ENCODE measurements at regions of chr1 and their contacts with region 1.

Region 1: DNA sequence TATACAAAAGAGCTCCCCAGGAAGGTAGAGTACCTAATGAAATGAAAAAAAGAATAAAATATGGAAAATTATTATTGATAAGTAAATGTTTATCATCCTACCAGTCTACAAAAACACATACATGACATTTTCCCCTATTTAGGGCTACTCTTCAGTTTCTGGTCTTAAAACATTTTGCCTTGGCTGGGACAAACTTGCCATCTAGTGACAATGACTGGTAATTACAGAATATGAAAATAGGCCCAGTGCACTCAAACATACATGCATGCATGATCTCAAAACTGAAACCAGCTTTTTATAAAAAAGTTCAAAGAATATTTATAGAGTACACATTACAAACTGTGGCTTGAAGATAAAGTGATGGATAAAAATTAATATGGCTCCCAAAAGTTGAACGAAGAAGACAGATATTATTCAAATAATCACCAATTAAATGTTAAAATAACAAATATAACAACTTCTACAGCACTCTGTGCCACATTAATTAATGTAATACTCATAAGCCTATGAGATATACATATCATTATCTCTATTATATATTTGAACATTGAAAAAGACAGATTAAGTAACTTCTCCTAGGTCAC is 10.5 kb upstream of the RNPC3 start:
- DNase-seq: peak in 1 of 3 donors; percentile 6
- ATAC-seq: peak; percentile 63
- H3K4me3 ChIP-seq: no peak overlapping the region
- H3K4me1 ChIP-seq: no peaks in the 10 kb centered on the region
- CTCF ChIP-seq: peak; percentile 39

Region 2: DNA sequence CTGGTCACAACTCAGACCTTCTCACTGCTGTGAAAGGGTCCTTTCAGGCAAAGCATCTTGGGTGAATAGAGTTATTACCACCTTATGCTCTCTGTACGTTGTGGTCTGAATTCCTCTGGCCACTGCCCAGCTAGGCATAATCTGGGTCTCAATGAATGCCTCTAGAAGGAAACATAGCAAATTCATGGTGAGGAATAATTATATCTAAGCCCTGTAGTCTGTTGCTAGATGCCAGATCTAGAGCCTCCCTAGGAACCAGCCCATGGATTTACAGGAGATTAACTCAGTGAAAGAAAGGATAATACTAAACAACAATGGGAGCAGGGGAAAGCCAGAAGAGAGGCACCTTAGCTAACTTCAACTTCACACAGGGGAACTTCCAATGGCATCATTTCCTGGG is 404.3 kb before region 1 on chr1:
- intact Hi-C with region 1: loop called in 1 of 2 experiments (anchors 5 kb)
- DNase-seq: no peak
- ATAC-seq: no peak
- H3K4me3 ChIP-seq: no peak overlapping the region
- H3K4me1 ChIP-seq: no peaks in the 10 kb centered on the region
- CTCF ChIP-seq: no peak

Region 3: DNA sequence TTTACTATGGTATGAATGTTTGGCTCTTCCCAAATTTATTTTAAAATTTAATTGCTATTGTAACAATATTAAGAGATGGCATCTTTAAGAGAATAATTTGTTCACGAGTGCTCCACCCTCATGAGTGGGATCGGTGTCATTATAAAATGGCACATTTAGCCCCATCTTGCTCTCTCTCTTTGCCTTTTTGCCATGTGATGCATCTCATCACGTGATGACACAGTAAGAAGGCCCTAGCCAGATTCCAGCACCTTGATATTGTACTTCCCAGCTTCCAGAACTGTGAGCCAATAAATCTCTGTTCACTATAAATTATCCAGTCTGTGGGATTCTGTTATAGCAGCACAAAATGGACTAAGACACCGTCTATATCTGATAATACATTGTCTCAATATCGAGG is 590.5 kb after region 1 on chr1:
- intact Hi-C with region 1: no loop called
- DNase-seq: no peak
- ATAC-seq: no peak
- H3K4me3 ChIP-seq: no peak overlapping the region
- H3K4me1 ChIP-seq: no peaks in the 10 kb centered on the region
- CTCF ChIP-seq: no peak